ENCODE measurements at regions of chr11 and their contacts with region 1.

Region 1: DNA sequence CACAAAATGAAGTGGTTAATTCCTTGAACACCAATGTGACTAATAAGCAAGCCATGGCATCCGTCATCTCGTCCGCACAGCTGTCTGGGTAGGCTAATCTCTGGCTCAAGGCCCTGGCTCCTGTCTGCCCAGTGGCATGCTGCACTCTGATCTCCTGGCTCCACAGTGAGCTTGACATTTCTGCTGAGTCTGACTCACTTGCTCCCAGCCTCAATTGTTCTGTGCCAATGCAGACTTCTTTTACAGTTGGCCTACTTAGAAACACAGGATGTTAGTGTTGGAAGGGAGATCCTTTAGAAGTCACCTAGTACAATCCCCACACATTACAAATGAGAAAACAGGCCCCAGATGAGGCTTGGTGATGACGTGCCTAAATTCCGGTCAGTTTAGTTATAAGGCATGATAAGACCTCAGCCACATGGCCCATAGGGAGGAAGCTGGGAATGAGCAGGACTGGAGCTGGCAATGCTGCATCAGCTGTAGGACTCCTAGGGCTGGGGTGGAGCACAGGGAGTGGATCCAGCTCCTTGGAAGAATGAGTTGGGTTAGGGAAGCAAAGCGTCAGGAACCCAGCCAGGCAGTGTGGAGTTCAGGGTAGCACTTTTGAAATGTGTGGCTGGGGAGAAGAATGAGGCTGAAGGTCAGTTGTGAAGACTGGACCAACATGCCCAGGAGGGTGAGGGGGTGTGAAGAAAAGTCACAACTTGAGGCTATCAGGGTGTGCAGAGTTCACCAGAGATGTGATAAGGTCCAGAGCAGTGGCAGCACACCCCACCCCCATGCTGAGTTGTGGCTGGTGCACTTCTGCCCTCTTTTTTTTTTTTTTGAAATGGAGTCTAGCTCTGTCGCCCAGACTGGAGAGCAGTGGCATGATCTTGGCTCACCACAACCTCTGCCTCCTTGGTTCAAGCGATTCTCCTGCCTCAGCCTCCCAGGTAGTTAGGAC is 70.2 kb upstream of the EED start:
- DNase-seq: peak; percentile 100
- H3K4me3 ChIP-seq: no peak overlapping the region
- H3K27ac ChIP-seq: peak overlapping the region; percentile 97
- H3K4me1 ChIP-seq: peaks cover 39% of the 10 kb centered on the region
- H3K27me3 ChIP-seq: no peaks in the 10 kb centered on the region
- CTCF ChIP-seq: no peak
- POLR2A ChIP-seq: no peak

Region 2: DNA sequence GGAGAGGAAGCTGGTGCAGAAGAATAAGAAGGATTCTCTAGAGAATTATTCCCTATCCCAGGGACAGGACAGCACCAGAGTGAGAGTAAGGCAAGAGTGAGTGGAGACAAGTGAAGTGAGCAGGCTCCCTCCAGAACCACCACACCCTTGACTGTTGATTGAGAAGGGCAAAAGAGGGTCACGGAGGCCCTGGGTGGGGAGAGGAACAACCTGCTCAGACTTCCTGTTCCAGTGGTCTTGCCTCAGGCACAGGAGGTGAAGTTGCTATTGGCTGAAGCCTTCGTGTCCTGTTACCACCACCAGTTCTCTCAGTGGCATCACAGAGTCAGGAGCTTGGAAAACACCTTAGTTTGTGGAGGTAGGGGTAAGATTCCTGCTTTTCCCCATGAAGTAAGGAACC is 436.6 kb before region 1 on chr11:
- CTCF ChIA-PET with region 1: no interaction called
- POLR2A ChIA-PET with region 1: no interaction called
- dilution Hi-C with region 1: no loop called
- intact Hi-C with region 1: loop called (anchors 5 kb)
- DNase-seq: no peak
- H3K4me3 ChIP-seq: no peak overlapping the region
- H3K27ac ChIP-seq: peak overlapping the region; percentile 27
- H3K4me1 ChIP-seq: peaks cover 33% of the 10 kb centered on the region
- H3K27me3 ChIP-seq: no peaks in the 10 kb centered on the region
- CTCF ChIP-seq: no peak
- POLR2A ChIP-seq: no peak

Region 3: GRCh38 chr11:86151174-86152005 is 23.0 kb before region 1 on chr11:
- CTCF ChIA-PET with region 1: interaction called, 8 read pairs
- POLR2A ChIA-PET with region 1: interaction called, 4 read pairs
- dilution Hi-C with region 1: no loop called
- intact Hi-C with region 1: loop called (anchors 1 kb)
- DNase-seq: peak; percentile 68
- H3K4me3 ChIP-seq: no peak overlapping the region
- H3K27ac ChIP-seq: peak overlapping the region; percentile 94
- H3K4me1 ChIP-seq: peaks cover 24% of the 10 kb centered on the region
- H3K27me3 ChIP-seq: no peaks in the 10 kb centered on the region
- CTCF ChIP-seq: no peak
- POLR2A ChIP-seq: no peak

Region 4: GRCh38 chr11:86244522-86245368 is 70.4 kb after region 1 on chr11 and contains the start of gene EED:
- CTCF ChIA-PET with region 1: no interaction called
- POLR2A ChIA-PET with region 1: no interaction called
- dilution Hi-C with region 1: no loop called
- intact Hi-C with region 1: loop called (anchors 1 kb)
- DNase-seq: peak; percentile 95
- H3K4me3 ChIP-seq: peak within 1 kb of the TSS; percentile 69 to 85 (median 84)
- H3K27ac ChIP-seq: peak within 1 kb of the TSS; percentile 85
- H3K4me1 ChIP-seq: peaks cover 16% of the 10 kb centered on the region
- H3K27me3 ChIP-seq: peaks cover 20% of the 10 kb centered on the region in 2 experiments
- CTCF ChIP-seq: no peak
- POLR2A ChIP-seq: peak; percentile 88
- total RNA-seq, gene EED: 21.8 and 22.7 TPM in 2 replicates

Measured in endothelial cell of umbilical vein (primary cell).